Dorsolateral prefrontal cortex (tissue), 120 donors: ENCODE measurements at regions of chr15 and their contacts with region 1.

Region 1: GRCh38 chr15:68053701-68054627 is at the start of gene PIAS1:
- DNase-seq: peak; percentile 88 to 96 (median 94)
- H3K4me3 ChIP-seq: peak within 1 kb of the TSS; percentile 75 to 99 (median 90)
- H3K27ac ChIP-seq: peak within 1 kb of the TSS; percentile 12 to 96 (median 88)
- H3K27me3 ChIP-seq: no peaks in the 10 kb centered on the region
- CTCF ChIP-seq: peak in 39 of 56 donors; percentile 6 to 61 (median 34)
- total RNA-seq, gene PIAS1: 40.9 to 75.2 (median 58.5) TPM

Region 2: DNA sequence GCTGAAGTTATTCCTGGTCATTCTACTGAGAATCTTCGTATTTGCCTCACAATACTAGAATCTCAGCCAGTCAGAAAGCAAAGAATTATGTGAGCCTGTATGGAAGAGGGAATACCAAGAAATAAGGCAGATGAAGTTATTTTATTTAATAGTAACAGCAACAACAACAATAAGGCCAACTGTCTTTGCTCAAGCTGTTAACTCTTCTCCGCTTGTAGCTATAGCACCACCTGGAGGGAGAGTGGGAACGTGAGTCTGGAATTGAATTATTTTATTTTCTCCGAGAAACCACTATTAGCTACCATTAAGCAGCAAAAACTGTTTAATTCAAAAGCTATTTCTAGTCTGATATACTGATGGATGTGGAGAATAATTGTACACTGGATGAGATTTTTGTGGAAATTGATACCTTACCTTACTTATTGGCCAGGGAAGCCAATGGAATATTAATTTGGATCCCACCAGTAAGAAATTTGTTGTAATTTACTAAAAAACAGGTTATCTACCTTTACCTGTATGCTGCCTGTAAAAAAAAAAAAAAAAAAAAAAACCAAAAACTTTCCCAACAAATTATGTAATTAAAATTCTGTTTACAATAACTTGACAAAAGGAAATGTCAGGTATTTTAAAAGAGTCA is 101.1 kb after region 1 on chr15:
- intact Hi-C with region 1: loop called in 1 of 2 experiments (anchors 10 kb)
- DNase-seq: peak in 3 of 10 donors; percentile 6 to 46 (median 44)
- H3K4me3 ChIP-seq: no peak overlapping the region
- H3K27ac ChIP-seq: peak overlapping the region in 1 of 59 donors; percentile 1
- H3K27me3 ChIP-seq: no peaks in the 10 kb centered on the region
- CTCF ChIP-seq: peak; percentile 53 to 90 (median 74)

Region 3: DNA sequence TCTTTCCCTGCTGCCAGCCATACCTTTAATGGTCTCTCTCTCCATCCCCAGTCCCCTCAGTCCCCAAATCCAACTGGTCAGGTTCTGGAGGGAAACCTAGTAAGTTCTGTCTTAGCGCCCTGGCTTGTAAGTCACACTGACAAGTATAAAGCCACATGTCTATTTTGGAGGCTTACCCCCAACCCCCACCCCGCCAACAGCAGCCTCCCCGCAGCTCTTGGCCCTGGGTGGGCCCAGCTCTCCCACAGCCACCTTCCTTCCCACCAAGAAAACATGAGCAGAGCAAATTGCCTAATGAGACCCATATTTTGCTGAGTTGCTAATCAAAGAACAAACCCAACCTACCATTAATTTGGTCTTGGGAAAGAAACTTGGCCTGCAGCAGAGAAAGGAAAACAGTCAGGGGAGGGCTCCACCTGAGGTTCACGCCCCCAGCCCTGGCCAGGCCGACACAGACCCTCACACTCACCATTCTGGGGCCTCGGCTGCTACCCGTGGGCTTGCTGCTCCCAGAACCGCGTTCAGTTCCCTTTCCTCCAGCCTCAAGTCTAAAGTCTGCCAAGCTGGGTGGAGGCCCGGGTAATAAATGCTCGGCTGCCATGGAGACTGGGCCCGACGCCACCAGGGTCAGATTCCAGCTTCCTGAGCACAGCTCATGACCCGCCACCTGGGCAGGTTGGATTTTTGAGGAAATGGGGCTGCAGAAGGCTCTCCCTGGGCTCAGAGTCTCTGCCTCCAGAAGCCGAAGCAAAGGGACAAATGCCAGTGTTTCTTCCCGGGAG is 151.0 kb after region 1 on chr15 and contains the start of gene CALML4:
- intact Hi-C with region 1: loop called in 1 of 2 experiments (anchors 10 kb)
- DNase-seq: peak in 3 of 10 donors; percentile 42 to 84 (median 49)
- H3K4me3 ChIP-seq: peak within 1 kb of the TSS in 29 of 59 donors; percentile 1 to 42 (median 20)
- H3K27ac ChIP-seq: peak within 1 kb of the TSS in 6 of 59 donors; percentile 13 to 55 (median 31)
- H3K27me3 ChIP-seq: no peaks in the 10 kb centered on the region
- CTCF ChIP-seq: no peak
- total RNA-seq, gene CALML4: 1.2 to 12.9 (median 4.6) TPM

Region 4: GRCh38 chr15:68218847-68219798 is 165.2 kb after region 1 on chr15:
- intact Hi-C with region 1: no loop called
- DNase-seq: peak in 1 of 10 donors; percentile 2
- H3K4me3 ChIP-seq: no peak overlapping the region
- H3K27ac ChIP-seq: no peak overlapping the region
- H3K27me3 ChIP-seq: no peaks in the 10 kb centered on the region
- CTCF ChIP-seq: no peak